HCT116 (cell line): ENCODE measurements at regions of chr5 and their contacts with region 1.

Region 1: DNA sequence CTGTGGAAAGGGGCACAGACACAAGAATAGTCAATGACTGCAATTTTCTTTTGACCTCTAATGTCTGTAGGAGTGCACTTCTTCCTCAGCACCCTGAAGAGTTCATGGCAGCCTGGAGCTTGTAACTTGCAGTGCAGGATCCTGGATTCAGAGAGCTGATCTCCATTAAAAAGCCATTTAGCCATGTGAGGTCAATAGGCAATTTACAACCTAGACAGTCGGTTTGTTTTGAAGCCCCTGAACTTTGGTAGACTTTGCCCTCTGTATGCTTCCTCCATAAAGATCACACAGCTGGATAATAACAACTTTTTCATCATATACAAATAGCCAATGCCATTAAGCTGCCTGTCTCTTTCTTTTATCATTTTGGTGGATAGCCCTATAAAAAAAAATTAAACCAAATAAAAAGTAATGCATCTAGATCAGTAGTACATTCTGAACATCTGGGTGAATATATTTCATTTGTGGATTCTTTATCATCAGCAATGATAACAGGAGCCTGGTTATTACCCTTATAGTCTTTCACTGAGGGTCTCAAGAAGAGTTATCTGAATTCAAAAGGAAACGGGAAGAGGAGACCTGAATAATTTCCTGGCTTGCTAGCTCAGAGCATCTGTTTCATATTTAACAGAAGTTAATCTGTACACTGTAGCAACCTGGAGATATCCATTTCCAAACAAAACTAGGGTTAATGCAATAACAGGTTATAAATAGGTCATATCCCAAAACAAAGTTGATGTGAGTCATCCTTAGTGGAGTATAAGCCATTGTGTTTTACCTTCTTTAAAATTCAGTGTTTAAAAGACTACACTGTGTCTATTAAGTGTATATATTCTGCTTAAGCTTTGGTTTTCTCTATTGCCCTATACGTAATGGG is 193.8 kb upstream of the ACTBL2 start:
- DNase-seq: no peak
- ATAC-seq: no peak
- H3K4me3 ChIP-seq: no peak overlapping the region
- H3K27ac ChIP-seq: no peak overlapping the region
- H3K4me1 ChIP-seq: peaks cover 0 to 11% of the 10 kb centered on the region in 2 experiments; a peak in 2 of 4 replicates
- H3K27me3 ChIP-seq: no peaks in the 10 kb centered on the region
- CTCF ChIP-seq: no peak
- POLR2A ChIP-seq: no peak
- RAD21 ChIP-seq: no peak

Region 2: GRCh38 chr5:56802205-56802604 is 874.3 kb before region 1 on chr5:
- CTCF ChIA-PET with region 1: no interaction called
- POLR2A ChIA-PET with region 1: no interaction called
- RAD21 ChIA-PET with region 1: no interaction called
- intact Hi-C with region 1: no loop called
- DNase-seq: no peak
- ATAC-seq: no peak
- H3K4me3 ChIP-seq: no peak overlapping the region
- H3K27ac ChIP-seq: no peak overlapping the region
- H3K4me1 ChIP-seq: no peaks in the 10 kb centered on the region
- H3K27me3 ChIP-seq: no peaks in the 10 kb centered on the region
- CTCF ChIP-seq: no peak
- POLR2A ChIP-seq: no peak
- RAD21 ChIP-seq: no peak

Region 3: DNA sequence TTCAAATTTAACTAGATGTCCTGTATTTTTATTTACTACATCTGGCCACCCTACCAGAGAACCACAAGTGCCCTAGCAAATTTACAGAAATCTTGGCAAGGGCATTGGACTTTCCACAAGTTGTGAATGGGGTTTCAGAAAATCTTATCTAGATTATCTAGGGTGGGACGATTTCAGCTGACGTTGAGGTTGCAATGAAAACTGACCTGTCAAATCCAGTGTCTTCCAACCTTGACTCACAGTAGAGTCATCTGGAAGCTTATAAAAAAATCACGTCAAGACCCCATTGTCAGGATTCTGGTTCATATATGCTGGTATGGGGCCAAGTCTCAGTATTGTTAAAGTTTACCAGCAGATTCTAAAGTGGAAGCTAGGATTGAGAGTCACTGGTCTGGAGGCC is 84.2 kb before region 1 on chr5:
- CTCF ChIA-PET with region 1: no interaction called
- POLR2A ChIA-PET with region 1: no interaction called
- RAD21 ChIA-PET with region 1: no interaction called
- intact Hi-C with region 1: no loop called
- DNase-seq: no peak
- ATAC-seq: no peak
- H3K4me3 ChIP-seq: no peak overlapping the region
- H3K27ac ChIP-seq: no peak overlapping the region
- H3K4me1 ChIP-seq: no peaks in the 10 kb centered on the region
- H3K27me3 ChIP-seq: no peaks in the 10 kb centered on the region
- CTCF ChIP-seq: no peak
- POLR2A ChIP-seq: no peak
- RAD21 ChIP-seq: no peak

Region 4: GRCh38 chr5:58191451-58191850 is 515.0 kb after region 1 on chr5:
- CTCF ChIA-PET with region 1: no interaction called
- POLR2A ChIA-PET with region 1: no interaction called
- RAD21 ChIA-PET with region 1: no interaction called
- intact Hi-C with region 1: loop called (anchors 10 kb)
- DNase-seq: no peak
- ATAC-seq: no peak
- H3K4me3 ChIP-seq: no peak overlapping the region
- H3K27ac ChIP-seq: no peak overlapping the region
- H3K4me1 ChIP-seq: peaks cover 9 to 34% of the 10 kb centered on the region in 2 experiments
- H3K27me3 ChIP-seq: no peaks in the 10 kb centered on the region
- CTCF ChIP-seq: no peak
- POLR2A ChIP-seq: no peak
- RAD21 ChIP-seq: no peak